Transverse colon (tissue), 4 donors: ENCODE measurements at regions of chr4 and their contacts with region 1.

Region 1: GRCh38 chr4:78002261-78002660 is 54.9 kb upstream of the FRAS1 start:
- DNase-seq: no peak
- H3K4me3 ChIP-seq: no peak overlapping the region
- H3K27ac ChIP-seq: no peak overlapping the region
- H3K4me1 ChIP-seq: no peaks in the 10 kb centered on the region
- H3K27me3 ChIP-seq: no peaks in the 10 kb centered on the region
- CTCF ChIP-seq: no peak
- EP300 ChIP-seq: no peak
- POLR2A ChIP-seq: no peak

Region 2: DNA sequence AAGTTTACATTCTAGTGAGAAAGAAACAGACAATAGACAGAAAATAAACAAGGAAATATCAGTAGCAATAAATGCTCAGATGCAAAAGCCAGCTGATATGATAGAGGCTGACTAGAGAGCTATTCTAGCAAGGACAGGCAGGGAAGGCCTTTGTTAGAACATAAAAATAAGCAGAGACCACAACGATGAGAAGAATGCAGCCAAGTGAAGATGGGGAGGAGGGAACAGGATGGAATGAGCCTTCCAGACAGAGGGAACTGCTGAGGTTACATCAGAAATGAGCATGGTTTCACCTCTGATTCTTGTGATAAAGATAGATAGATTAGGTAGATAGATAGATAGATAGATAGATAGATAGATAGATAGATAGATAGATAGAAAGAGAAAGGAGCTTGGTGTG is 1096.7 kb before region 1 on chr4:
- in situ Hi-C with region 1: no loop called
- intact Hi-C with region 1: loop called (anchors 5 kb)
- DNase-seq: no peak
- H3K4me3 ChIP-seq: no peak overlapping the region
- H3K27ac ChIP-seq: no peak overlapping the region
- H3K4me1 ChIP-seq: peaks cover 0 to 12% (median 2%) of the 10 kb centered on the region in 4 donors
- H3K27me3 ChIP-seq: no peaks in the 10 kb centered on the region
- CTCF ChIP-seq: no peak
- EP300 ChIP-seq: no peak
- POLR2A ChIP-seq: no peak

Region 3: GRCh38 chr4:77950203-77950602 is 52.1 kb before region 1 on chr4:
- in situ Hi-C with region 1: no loop called
- intact Hi-C with region 1: no loop called
- DNase-seq: no peak
- H3K4me3 ChIP-seq: no peak overlapping the region
- H3K27ac ChIP-seq: no peak overlapping the region
- H3K4me1 ChIP-seq: no peaks in the 10 kb centered on the region
- H3K27me3 ChIP-seq: no peaks in the 10 kb centered on the region
- CTCF ChIP-seq: no peak
- EP300 ChIP-seq: no peak
- POLR2A ChIP-seq: no peak